Naive thymus-derived CD4-positive, alpha-beta T cell (primary cell): ENCODE measurements at regions of chr7 and their contacts with region 1.

Region 1: DNA sequence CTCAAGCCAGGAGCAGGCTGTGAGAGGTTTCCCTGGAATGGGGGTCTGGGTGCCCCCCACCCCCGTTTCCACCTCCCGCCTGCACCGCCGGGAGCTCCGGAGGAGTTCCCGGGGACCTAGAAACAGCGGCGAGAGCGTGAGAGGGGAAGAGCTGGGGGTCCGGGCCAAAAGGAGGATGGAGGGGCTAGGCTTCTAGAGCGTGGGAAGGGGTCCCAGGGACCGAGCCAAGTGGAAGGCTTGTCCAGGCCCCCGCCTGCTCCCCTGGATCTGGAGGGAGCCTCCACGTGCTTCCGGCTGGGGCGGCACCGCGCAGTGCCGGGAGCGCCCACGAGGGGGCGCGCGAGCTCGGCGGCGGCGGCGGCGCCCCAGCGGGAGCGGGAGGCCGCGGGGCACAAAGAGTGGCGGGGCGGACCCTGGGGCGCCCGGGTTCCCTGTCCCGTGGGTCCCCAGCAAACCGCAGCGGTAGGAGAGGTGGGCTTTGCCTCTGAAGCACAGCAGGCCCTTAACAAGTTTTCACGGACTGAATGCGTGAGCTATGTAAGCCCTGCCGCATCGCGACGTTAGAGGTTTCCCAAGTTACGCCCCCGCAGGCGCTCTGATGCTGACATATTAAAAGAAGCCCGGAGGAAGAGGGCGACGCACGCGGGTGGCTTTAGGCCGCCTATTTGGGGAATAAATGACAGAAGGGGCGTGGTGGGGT is 104.4 kb upstream of the LRRC4 start:
- DNase-seq: peak; percentile 44 to 83 (median 68)
- ATAC-seq: peak; percentile 96
- H3K4me3 ChIP-seq: peak overlapping the region; percentile 59
- H3K4me3 Mint-ChIP-seq: peak overlapping the region; percentile 67 to 88 (median 83)
- H3K27ac ChIP-seq: no peak overlapping the region
- H3K27ac Mint-ChIP-seq: peak overlapping the region in 5 of 9 donors; percentile 25 to 80 (median 48)
- H3K4me1 ChIP-seq: peaks cover 5 to 12% of the 10 kb centered on the region in 2 donors
- H3K4me1 Mint-ChIP-seq: peaks cover 9 to 26% (median 17%) of the 10 kb centered on the region in 7 donors
- H3K27me3 ChIP-seq: no peaks in the 10 kb centered on the region
- H3K27me3 Mint-ChIP-seq: peaks cover 14 to 60% (median 29%) of the 10 kb centered on the region in 5 donors

Region 2: DNA sequence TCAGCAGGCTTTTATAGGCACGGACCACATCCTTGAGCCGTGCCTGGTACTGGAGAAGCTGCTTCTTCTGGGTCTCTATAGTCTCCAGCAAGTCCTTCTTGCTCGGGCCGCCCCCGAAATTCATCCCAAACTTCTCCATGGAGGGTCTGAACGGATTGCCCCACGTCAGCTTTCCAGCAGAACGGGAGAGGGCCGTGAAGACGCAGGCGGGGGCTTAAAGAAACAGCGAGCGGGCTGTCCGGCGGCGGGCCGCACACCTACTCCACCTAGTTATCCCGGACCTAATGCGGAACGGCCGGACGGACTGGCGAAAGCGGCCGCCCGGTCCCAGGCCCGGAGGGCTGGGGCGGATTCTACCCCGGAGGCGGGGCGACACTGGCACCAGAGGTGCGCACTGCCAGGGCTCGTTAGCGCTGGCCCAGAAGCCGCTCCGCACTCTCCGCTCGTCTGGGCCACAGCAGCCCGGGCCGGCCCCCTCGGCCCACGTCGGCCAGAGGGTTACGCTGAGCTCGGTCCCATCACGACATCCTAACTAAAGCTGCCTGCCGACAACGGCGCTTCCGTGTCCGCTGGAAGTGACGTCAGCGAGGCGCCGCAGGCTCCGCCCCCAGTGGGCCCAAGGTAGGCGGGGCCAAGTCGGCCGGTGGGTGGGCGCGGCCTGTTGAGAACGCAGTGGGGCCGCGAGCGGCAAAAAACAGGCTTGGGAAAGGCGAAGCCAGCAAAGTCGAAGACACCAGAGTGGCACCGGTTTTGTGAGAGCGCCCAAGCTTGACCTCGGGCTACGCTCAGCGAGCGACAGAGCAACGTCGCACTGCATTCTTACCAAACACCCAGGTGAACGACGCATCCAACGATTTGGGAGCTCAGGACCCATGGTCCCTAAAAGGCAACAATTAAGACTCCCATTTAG is 550.4 kb before region 1 on chr7 and contains the start of gene GCC1:
- CTCF ChIA-PET with region 1: no interaction called
- POLR2A ChIA-PET with region 1: no interaction called
- intact Hi-C with region 1: loop called in 1 of 2 experiments (anchors 10 kb)
- DNase-seq: peak; percentile 87 to 98 (median 93)
- ATAC-seq: peak; percentile 87
- H3K4me3 ChIP-seq: peak within 1 kb of the TSS; percentile 87
- H3K4me3 Mint-ChIP-seq: peak within 1 kb of the TSS; percentile 86 to 98 (median 92)
- H3K27ac ChIP-seq: peak within 1 kb of the TSS; percentile 88
- H3K27ac Mint-ChIP-seq: peak within 1 kb of the TSS; percentile 77 to 97 (median 94)
- H3K4me1 ChIP-seq: peaks cover 47 to 55% of the 10 kb centered on the region in 2 donors
- H3K4me1 Mint-ChIP-seq: peaks cover 55 to 88% (median 78%) of the 10 kb centered on the region in 7 donors
- H3K27me3 ChIP-seq: no peaks in the 10 kb centered on the region
- H3K27me3 Mint-ChIP-seq: no peaks in the 10 kb centered on the region
- total RNA-seq, gene GCC1: 19.6 to 31.3 (median 23.7) TPM

Region 3: GRCh38 chr7:127858091-127858914 is 277.4 kb before region 1 on chr7:
- CTCF ChIA-PET with region 1: interaction called, 3 read pairs
- POLR2A ChIA-PET with region 1: no interaction called
- intact Hi-C with region 1: loop called in 1 of 2 experiments (anchors 5 kb)
- DNase-seq: no peak
- ATAC-seq: no peak
- H3K4me3 ChIP-seq: no peak overlapping the region
- H3K4me3 Mint-ChIP-seq: peak overlapping the region in 4 of 10 donors; percentile 7 to 42 (median 40)
- H3K27ac ChIP-seq: no peak overlapping the region
- H3K27ac Mint-ChIP-seq: peak overlapping the region in 1 of 9 donors; percentile 75
- H3K4me1 ChIP-seq: peaks cover 25 to 37% of the 10 kb centered on the region in 2 donors
- H3K4me1 Mint-ChIP-seq: peaks cover 22 to 59% (median 49%) of the 10 kb centered on the region in 7 donors
- H3K27me3 ChIP-seq: no peaks in the 10 kb centered on the region
- H3K27me3 Mint-ChIP-seq: peaks cover 5 to 40% (median 18%) of the 10 kb centered on the region in 5 donors

Region 4: GRCh38 chr7:128056901-128057300 is 78.8 kb before region 1 on chr7:
- CTCF ChIA-PET with region 1: interaction called, 4 read pairs
- POLR2A ChIA-PET with region 1: no interaction called
- intact Hi-C with region 1: loop called in 1 of 2 experiments (anchors 1 kb)
- DNase-seq: no peak
- ATAC-seq: no peak
- H3K4me3 ChIP-seq: no peak overlapping the region
- H3K4me3 Mint-ChIP-seq: no peak overlapping the region
- H3K27ac ChIP-seq: no peak overlapping the region
- H3K27ac Mint-ChIP-seq: peak overlapping the region in 2 of 9 donors; percentile 32
- H3K4me1 ChIP-seq: peaks cover 23 to 58% of the 10 kb centered on the region in 2 donors
- H3K4me1 Mint-ChIP-seq: peaks cover 44 to 97% (median 78%) of the 10 kb centered on the region in 7 donors
- H3K27me3 ChIP-seq: no peaks in the 10 kb centered on the region
- H3K27me3 Mint-ChIP-seq: no peaks in the 10 kb centered on the region

Region 5: DNA sequence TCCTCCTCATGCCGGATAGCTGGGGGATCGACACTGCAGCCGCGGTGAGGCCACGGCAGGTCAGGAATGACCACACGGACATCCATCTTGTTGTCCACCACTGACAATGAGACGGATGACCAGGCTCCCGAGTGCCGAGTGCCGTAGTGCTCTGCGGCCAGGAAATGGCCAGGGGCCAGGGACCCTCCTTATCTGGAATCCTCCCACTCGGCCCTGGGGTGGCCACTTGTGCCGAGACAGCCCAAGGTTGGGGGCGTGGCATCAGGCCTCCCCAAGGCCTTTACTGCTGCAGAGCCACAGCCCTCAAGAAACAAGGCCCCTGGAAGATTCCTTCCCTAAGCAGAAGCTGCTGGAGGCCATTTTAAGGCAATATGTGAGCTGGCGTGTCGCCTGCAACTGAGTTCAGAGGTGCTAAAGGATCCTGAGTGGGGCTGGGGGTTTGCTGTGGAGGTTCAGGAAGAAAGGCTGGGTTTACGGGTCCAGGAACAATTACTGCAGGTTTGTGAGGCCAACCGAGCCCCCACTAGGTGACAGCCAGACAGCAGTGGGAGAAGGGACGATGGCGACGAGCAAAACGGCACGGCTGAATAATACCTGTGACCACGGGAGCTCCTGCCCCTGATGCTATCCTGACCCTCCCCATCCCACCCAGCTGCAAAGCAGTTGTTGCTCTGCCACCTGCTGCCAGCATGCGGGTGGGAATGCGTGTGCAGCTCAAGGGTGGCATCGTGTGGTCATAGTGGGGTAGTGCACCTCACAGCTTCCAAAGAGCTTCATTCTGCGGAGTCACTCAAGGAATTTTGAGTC is 73.8 kb after region 1 on chr7:
- CTCF ChIA-PET with region 1: interaction called, 10 read pairs
- POLR2A ChIA-PET with region 1: no interaction called
- intact Hi-C with region 1: loop called (anchors 1 kb)
- DNase-seq: peak; percentile 44 to 73 (median 64)
- ATAC-seq: peak; percentile 94
- H3K4me3 ChIP-seq: no peak overlapping the region
- H3K4me3 Mint-ChIP-seq: no peak overlapping the region
- H3K27ac ChIP-seq: no peak overlapping the region
- H3K27ac Mint-ChIP-seq: no peak overlapping the region
- H3K4me1 ChIP-seq: no peaks in the 10 kb centered on the region
- H3K4me1 Mint-ChIP-seq: peaks cover 0 to 2% (median 0%) of the 10 kb centered on the region in 7 donors
- H3K27me3 ChIP-seq: no peaks in the 10 kb centered on the region
- H3K27me3 Mint-ChIP-seq: peaks cover 0 to 24% (median 19%) of the 10 kb centered on the region in 5 donors

Region 6: DNA sequence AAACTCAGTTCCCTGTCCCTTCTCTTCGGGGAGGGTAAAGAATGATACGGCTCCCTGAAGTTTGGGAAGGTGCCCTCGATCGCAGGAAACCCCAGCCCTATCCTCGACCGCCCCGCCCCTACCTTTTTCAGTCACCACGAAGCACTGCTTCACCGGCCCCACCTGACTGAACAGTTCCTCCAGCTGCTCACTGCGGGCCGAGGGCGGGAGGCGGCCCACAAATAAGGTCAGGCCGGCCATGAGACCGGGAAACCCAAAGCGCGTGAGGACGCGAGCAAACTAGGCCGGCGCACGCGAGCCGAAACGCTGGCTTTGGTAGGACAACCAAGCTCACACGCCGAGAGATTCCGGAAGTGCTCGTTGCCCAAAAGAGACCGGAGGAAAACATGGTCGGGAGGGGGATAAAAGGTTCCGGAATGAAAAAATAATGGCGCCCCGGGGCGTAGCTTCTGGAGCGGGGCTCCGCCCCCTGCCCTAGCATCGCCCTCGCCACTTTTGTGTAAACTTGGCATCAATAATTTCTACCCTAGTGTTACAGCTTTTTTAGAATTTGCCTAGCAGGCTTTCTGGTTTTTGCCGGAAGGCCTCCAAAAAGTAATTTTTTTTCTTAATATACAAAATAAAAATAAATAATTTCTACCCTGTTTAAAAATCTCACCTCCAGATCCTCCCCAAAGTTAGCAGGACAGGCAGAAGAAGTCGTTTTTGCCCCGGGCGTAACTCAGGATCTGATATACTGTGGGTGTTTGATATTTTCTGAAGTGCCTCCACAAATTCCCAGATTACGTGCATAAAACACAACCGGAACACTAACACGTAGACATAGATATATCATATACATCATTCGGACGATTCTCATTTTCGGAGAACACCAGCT is 208.1 kb after region 1 on chr7 and contains the start of gene RBM28:
- CTCF ChIA-PET with region 1: no interaction called
- POLR2A ChIA-PET with region 1: no interaction called
- intact Hi-C with region 1: no loop called
- DNase-seq: peak; percentile 80 to 93 (median 90)
- ATAC-seq: peak; percentile 98
- H3K4me3 ChIP-seq: peak within 1 kb of the TSS; percentile 97
- H3K4me3 Mint-ChIP-seq: peak within 1 kb of the TSS; percentile 89 to 98 (median 96)
- H3K27ac ChIP-seq: peak within 1 kb of the TSS; percentile 83
- H3K27ac Mint-ChIP-seq: peak within 1 kb of the TSS; percentile 83 to 96 (median 93)
- H3K4me1 ChIP-seq: peaks cover 16 to 20% of the 10 kb centered on the region in 2 donors
- H3K4me1 Mint-ChIP-seq: peaks cover 19 to 44% (median 34%) of the 10 kb centered on the region in 7 donors
- H3K27me3 ChIP-seq: no peaks in the 10 kb centered on the region
- H3K27me3 Mint-ChIP-seq: peaks cover 0 to 15% (median 7%) of the 10 kb centered on the region in 5 donors
- total RNA-seq, gene RBM28: 30.1 to 51.0 (median 43.5) TPM

Region 7: DNA sequence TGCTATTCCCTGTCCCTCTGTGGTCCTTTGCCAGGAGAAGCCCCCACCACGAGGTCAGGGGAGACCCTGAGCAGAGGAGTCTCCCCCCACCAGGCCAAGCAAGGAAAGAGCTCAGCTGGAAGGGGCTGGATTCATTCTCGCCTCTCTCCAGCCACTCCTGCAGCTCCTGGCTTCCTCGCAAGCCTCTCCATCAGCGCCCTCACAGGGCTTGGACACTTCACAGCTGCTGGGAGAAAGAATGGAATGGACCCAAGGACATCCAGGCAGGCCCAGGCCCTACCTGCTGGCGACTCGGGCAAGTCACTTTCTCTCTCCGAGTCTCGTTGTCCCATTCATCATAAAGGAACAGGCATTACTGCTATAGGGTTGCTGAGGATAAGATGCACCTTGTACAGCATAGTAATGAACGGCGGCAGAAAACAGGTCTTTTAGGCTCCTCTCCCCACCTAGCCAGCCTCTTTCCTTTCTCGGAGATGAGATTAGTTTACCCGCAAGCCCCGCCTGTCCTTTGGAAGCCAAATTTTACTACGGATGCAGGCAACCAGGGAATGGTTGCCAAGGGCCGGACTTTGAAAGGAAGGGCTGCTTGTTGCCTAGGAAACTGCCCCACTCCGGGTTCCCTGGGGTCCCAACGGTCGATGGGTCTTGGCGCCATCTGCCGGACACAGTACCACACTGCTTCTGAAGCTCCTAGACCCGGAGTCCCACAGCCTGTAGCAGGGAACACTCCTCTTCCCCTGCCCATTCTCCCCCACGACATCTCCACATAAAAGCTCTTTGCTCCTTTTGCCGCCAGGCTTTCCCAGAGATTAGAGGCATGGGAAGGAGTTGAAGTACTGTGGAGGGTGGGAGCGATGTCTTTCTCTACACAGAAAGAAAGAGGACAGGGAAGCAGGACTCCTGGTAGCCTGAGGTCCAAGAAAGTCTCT is 251.8 kb after region 1 on chr7:
- CTCF ChIA-PET with region 1: no interaction called
- POLR2A ChIA-PET with region 1: no interaction called
- intact Hi-C with region 1: loop called in 1 of 2 experiments (anchors 2 kb)
- DNase-seq: peak; percentile 31 to 67 (median 48)
- ATAC-seq: peak; percentile 87
- H3K4me3 ChIP-seq: no peak overlapping the region
- H3K4me3 Mint-ChIP-seq: no peak overlapping the region
- H3K27ac ChIP-seq: no peak overlapping the region
- H3K27ac Mint-ChIP-seq: no peak overlapping the region
- H3K4me1 ChIP-seq: no peaks in the 10 kb centered on the region
- H3K4me1 Mint-ChIP-seq: peaks cover 0 to 6% (median 1%) of the 10 kb centered on the region in 7 donors
- H3K27me3 ChIP-seq: no peaks in the 10 kb centered on the region
- H3K27me3 Mint-ChIP-seq: peaks cover 0 to 4% (median 0%) of the 10 kb centered on the region in 5 donors